PC-9 (cell line): ENCODE measurements at regions of chr4 and their contacts with region 1.

Region 1: GRCh38 chr4:41532882-41533281 is 5.1 kb upstream of the LIMCH1 start:
- DNase-seq: no peak
- H3K4me3 ChIP-seq: no peak overlapping the region
- H3K27ac ChIP-seq: peak overlapping the region; percentile 52
- H3K4me1 ChIP-seq: peaks cover 76% of the 10 kb centered on the region
- H3K27me3 ChIP-seq: no peaks in the 10 kb centered on the region
- CTCF ChIP-seq: no peak

Region 2: DNA sequence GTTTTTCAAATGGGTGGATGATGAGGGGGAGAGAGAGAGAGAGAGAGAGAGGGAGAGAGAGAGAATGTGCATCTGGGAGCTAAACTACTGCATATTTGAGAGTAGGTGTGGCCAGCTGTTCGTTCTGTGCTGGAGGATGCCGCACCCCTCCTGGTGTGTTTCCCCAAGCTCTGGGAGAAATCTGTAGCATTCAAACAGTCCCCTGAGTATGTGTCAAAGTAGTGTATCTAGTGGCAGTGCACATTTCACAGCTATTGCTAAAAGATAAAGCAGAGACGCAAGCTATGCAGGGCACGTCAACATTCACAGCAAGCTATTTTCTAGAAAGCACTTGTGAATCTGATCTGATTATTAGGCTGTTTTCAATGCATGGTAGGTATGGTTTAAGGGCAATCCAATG is 78.5 kb before region 1 on chr4:
- CTCF ChIA-PET with region 1: interaction called, 6 read pairs
- POLR2A ChIA-PET with region 1: interaction called, 10 read pairs
- intact Hi-C with region 1: no loop called
- DNase-seq: peak in 1 of 2 experiments; percentile 24
- H3K4me3 ChIP-seq: no peak overlapping the region
- H3K27ac ChIP-seq: no peak overlapping the region
- H3K4me1 ChIP-seq: peaks cover 25% of the 10 kb centered on the region
- H3K27me3 ChIP-seq: no peaks in the 10 kb centered on the region
- CTCF ChIP-seq: no peak

Region 3: GRCh38 chr4:41550308-41550707 is 17.4 kb after region 1 on chr4:
- CTCF ChIA-PET with region 1: no interaction called
- POLR2A ChIA-PET with region 1: interaction called, 15 read pairs
- intact Hi-C with region 1: no loop called
- DNase-seq: peak in 1 of 2 experiments; percentile 79
- H3K4me3 ChIP-seq: no peak overlapping the region
- H3K27ac ChIP-seq: peak overlapping the region; percentile 38; the same call in 1 of the 2 replicates
- H3K4me1 ChIP-seq: peaks cover 16% of the 10 kb centered on the region
- H3K27me3 ChIP-seq: no peaks in the 10 kb centered on the region
- CTCF ChIP-seq: no peak